HEK293 (cell line): ENCODE measurements at regions of chr16 and their contacts with region 1.

Region 1: GRCh38 chr16:31073968-31074813 is at the starts of genes ZNF646 and ZNF668:
- H3K4me3 ChIP-seq: peak within 1 kb of the TSS; percentile 93
- H3K27ac ChIP-seq: peak within 1 kb of the TSS; percentile 83
- H3K4me1 ChIP-seq: no peaks in the 10 kb centered on the region
- CTCF ChIP-seq: peak; percentile 63

Region 2: GRCh38 chr16:31032736-31033708 is 41.2 kb before region 1 on chr16 and contains the start of gene STX4:
- CTCF ChIA-PET with region 1: no interaction called
- POLR2A ChIA-PET with region 1: interaction called, 18 read pairs
- H3K4me3 ChIP-seq: peak within 1 kb of the TSS; percentile 86
- H3K27ac ChIP-seq: peak within 1 kb of the TSS; percentile 58; the same call in 1 of the 2 replicates
- H3K4me1 ChIP-seq: no peaks in the 10 kb centered on the region
- CTCF ChIP-seq: peak; percentile 37; the same call in 1 of the 2 replicates

Region 3: DNA sequence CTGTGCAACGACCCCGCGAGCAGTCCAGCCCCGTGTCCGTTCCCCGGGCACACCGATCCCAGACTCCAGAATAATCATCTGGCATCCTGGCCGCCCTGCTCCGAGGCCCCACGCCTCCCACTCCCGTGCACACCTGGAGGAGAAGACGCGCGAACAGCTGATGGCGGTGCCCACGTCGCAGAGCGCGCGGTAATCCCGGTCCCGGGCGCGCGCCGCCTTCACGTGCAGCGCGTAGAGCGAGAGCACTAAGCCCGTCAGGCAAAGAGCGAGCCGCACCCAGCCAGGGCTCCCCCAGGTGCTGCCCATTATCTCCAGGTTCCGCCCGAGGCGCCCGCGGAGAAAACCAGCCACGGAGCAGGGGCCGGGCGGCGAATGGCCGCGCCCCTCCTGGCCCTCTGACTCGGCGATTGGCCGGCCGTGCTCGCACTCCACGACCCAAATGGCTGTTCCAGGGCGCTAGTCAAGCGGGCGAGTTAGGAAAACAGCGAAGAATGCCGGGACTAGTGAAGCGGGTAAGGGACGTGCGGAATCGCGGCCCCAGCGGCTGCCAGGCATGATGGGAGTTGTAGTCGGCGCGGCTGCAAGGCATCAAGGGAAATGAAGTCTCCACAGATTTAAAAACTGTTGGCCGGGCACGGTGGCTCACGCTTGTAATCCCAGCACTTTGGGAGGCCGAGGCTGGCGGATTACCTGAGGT is 20.4 kb after region 1 on chr16 and contains the start of gene VKORC1:
- CTCF ChIA-PET with region 1: interaction called, 3 read pairs
- POLR2A ChIA-PET with region 1: interaction called, 26 read pairs
- H3K4me3 ChIP-seq: peak within 1 kb of the TSS; percentile 79
- H3K27ac ChIP-seq: peak within 1 kb of the TSS; percentile 85
- H3K4me1 ChIP-seq: peaks cover 3% of the 10 kb centered on the region; the same call in 1 of the 2 replicates
- CTCF ChIP-seq: no peak

Region 4: DNA sequence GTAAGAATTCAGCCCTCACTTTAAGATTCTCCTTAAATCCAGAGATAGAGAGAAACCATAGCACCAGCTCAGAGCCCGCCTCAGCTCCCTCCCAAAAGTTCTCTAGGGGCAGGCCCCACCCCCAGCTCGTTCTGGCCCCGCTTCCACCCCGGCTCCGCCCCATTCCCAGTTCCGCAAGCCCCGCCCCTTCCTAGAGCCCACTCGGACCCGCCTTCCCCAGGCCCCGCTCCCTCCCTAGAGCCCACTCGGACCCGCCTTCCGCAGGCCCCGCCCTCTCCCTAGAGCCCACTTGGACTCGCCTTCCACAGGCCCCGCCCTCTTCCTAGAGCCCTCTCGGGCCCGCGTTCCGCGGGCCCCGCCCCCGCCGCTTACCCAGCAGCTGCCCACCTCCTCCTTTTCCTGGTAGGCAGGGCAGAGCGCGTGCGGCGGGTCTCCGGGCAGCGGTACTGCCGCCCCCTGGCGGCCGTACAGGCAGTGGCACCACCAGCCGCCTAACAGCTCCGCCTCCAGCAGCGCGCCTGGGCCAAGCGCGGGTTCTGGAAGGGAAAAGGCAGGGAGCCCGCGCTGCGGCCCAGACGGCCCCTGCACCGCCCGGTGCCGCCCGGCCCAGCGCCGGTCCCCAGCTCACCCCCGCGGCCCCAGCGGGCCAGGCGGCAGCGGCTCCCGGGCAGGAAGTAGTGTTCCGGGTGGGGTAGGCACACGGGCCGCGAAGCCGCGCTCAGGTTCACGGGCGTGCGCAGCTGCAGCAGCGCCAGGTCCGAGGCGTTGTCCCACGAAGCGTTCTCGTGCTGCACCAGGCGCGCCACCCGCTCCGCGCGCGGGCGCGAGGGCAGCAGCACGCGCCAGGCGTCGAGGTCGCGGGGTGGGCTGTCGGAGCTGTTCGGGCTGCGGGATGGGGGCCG is 68.2 kb after region 1 on chr16:
- CTCF ChIA-PET with region 1: interaction called, 11 read pairs
- POLR2A ChIA-PET with region 1: interaction called, 22 read pairs
- H3K4me3 ChIP-seq: peak overlapping the region; percentile 27
- H3K27ac ChIP-seq: peak overlapping the region; percentile 63; the same call in 1 of the 2 replicates
- H3K4me1 ChIP-seq: no peaks in the 10 kb centered on the region; the same call in 1 of the 2 replicates
- CTCF ChIP-seq: peak; percentile 96

Region 5: DNA sequence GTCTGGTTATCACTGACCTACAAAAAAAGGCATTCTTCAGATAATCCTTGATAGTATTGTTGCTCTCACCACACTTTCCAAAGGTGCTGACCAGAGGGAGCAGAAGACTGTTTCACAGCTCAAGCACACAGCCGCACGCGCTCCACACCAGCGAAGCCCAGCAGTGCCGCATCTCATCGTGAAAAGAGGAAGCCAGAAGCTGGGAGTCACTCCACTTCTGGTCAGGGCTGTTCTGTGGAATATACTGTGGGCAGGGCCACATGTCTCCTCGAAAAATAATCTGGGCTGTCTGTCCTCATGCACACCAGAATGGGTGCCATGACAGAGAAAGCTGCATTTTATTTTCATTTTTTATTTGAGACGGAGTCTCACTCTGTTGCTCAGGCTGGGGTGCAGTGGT is 82.9 kb after region 1 on chr16:
- CTCF ChIA-PET with region 1: no interaction called
- POLR2A ChIA-PET with region 1: no interaction called
- H3K4me3 ChIP-seq: no peak overlapping the region
- H3K27ac ChIP-seq: no peak overlapping the region
- H3K4me1 ChIP-seq: no peaks in the 10 kb centered on the region
- CTCF ChIP-seq: no peak